ENCODE measurements at regions of chr11 and their contacts with region 1.

Region 1: DNA sequence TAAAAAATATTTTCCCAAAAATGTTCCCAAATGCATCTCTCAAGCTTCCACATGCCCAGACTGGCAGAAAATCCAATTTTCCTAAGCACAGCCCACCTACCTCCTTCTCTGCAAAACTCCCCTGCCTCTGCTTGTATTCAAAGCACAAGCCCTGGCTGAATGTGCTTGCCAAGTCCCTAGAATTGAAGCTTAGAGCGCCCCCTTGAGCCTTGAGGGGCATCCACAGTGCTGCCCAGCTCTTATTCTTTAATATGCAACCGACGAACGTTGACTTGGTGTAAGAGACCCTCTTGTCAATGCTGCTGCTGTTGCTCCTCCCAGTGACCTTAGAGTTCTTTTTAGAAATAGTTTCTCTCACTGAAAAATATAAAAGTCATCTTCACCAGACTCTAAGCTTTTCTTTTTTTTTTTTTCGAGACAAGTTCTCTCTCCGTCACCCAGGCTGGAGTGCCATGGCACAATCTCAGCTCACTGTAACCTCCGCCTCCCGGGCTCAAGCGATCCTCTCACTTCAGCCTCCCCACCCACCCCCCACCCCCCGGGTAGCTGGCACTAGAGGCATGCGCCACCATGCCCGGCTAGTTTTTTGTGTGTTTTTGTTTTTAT is 63.5 kb upstream of the CAPRIN1 start:
- H3K4me3 ChIP-seq: no peak overlapping the region
- H3K27ac ChIP-seq: no peak overlapping the region
- H3K4me1 ChIP-seq: no peaks in the 10 kb centered on the region
- CTCF ChIP-seq: no peak

Region 2: GRCh38 chr11:33808228-33808828 is 179.8 kb before region 1 on chr11:
- CTCF ChIA-PET with region 1: interaction called, 20 read pairs
- POLR2A ChIA-PET with region 1: no interaction called
- H3K4me3 ChIP-seq: no peak overlapping the region
- H3K27ac ChIP-seq: no peak overlapping the region
- H3K4me1 ChIP-seq: no peaks in the 10 kb centered on the region
- CTCF ChIP-seq: peak; percentile 74

Region 3: DNA sequence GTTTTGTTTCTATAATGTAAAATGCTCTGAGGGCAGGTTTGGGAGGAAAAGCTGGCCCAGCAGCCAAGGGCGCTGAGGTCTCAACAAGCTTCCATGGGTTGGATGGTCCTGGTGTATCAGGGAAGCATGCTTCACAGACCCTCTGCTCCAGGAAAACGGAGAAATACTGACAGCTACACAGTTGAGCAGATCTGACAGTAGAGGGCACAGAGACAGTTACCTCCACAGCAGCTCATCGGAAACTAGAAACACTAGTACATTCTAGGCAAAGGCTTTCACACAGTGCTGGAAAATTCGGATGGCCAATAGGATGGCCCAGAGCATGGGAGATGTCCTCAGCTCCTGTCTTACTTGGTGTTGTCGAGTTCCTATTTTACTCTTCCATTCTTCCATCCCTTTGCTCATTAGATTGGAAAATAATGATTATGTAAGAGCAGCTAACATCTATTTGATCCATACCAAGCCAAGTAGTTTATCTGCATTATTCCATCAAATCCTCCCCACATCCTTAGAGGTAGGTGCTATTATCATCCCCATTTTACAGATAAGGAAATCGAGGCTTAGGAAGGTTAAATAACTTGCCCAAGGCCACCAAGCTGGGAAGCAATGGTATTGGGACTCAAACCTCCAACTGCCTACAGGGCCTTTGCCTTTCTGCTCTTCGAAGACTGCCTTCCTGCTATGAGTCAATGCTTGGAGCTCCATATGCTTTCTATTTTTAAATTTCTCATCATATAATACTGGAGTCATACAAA is 124.5 kb before region 1 on chr11:
- CTCF ChIA-PET with region 1: interaction called, 40 read pairs
- POLR2A ChIA-PET with region 1: no interaction called
- H3K4me3 ChIP-seq: no peak overlapping the region
- H3K27ac ChIP-seq: no peak overlapping the region
- H3K4me1 ChIP-seq: no peaks in the 10 kb centered on the region
- CTCF ChIP-seq: no peak

Region 4: DNA sequence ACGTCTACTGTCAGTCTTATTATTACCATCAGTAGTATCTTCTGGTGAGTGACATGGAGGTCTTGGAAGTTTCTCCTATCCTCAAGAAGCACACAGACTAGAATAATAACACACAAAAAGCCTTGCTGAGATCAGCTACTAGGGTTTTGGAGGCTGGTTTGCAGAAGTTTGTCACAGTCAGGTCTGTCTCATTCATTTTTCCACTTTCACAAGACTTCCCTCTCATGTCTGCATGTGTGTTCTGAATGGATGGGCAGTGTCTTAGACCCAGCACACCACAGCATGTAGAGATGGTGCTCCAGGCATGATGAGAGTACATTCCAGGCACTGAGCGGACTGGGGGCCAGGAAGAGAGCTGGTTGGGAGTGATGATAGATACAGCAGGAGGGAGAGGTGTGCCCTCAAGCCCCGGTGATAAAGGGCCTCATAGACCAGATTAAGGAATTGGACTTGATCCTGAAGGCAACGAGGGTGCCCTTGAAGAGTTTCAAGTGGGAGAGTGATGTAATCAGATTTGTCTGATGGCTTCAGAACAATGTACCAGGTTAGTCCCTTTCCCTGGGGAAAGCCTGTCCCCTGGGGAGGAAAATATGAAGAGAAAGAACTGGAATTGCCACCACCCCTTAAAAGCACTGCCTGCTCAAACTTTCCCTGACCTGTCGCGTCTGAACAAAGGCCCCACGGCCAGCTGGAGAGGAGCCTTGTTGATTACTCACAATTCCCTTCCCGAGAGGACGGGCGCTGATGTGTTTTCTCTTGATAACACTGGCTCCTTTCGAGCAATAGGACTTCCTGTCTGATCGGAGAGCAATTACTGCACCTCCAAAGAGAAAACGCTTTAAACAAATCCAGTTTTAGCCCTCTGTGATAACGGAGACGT is 51.1 kb before region 1 on chr11:
- CTCF ChIA-PET with region 1: interaction called, 14 read pairs
- POLR2A ChIA-PET with region 1: no interaction called
- H3K4me3 ChIP-seq: no peak overlapping the region
- H3K27ac ChIP-seq: no peak overlapping the region
- H3K4me1 ChIP-seq: no peaks in the 10 kb centered on the region
- CTCF ChIP-seq: no peak

Region 5: GRCh38 chr11:33965032-33965431 is 23.0 kb before region 1 on chr11:
- CTCF ChIA-PET with region 1: interaction called, 25 read pairs
- POLR2A ChIA-PET with region 1: no interaction called
- H3K4me3 ChIP-seq: no peak overlapping the region
- H3K27ac ChIP-seq: no peak overlapping the region
- H3K4me1 ChIP-seq: no peaks in the 10 kb centered on the region
- CTCF ChIP-seq: no peak

Region 6: GRCh38 chr11:33976495-33977199 is 11.4 kb before region 1 on chr11:
- CTCF ChIA-PET with region 1: interaction called, 25 read pairs
- POLR2A ChIA-PET with region 1: no interaction called
- H3K4me3 ChIP-seq: no peak overlapping the region
- H3K27ac ChIP-seq: no peak overlapping the region
- H3K4me1 ChIP-seq: no peaks in the 10 kb centered on the region
- CTCF ChIP-seq: no peak